ENCODE measurements at regions of chr3 and their contacts with region 1.

Region 1: GRCh38 chr3:196609343-196609775 is 30.1 kb upstream of the NRROS start:
- DNase-seq: peak; percentile 93 to 96 (median 94)
- ATAC-seq: peak; percentile 96
- H3K4me3 ChIP-seq: no peak overlapping the region
- H3K27ac ChIP-seq: no peak overlapping the region; the same call in 2 of the 3 replicates
- H3K4me1 ChIP-seq: peaks cover 11 to 20% of the 10 kb centered on the region in 2 experiments
- H3K27me3 ChIP-seq: no peaks in the 10 kb centered on the region
- CTCF ChIP-seq: peak; percentile 81 to 94 (median 92)
- EP300 ChIP-seq: 0 out of 2 replicates have a peak, but pooled peaks have one; percentile 8
- POLR2A ChIP-seq: no peak
- RAD21 ChIP-seq: peak; percentile 94 to 98

Region 2: GRCh38 chr3:196632046-196632751 is 22.8 kb after region 1 on chr3:
- CTCF ChIA-PET with region 1: no interaction called
- POLR2A ChIA-PET with region 1: interaction called, 6 read pairs
- in situ Hi-C with region 1: no loop called
- intact Hi-C with region 1: loop called (anchors 1 kb)
- DNase-seq: peak; percentile 95 to 97 (median 96)
- ATAC-seq: peak; percentile 93
- H3K4me3 ChIP-seq: peak overlapping the region; percentile 56
- H3K27ac ChIP-seq: peak overlapping the region; percentile 98
- H3K4me1 ChIP-seq: peaks cover 23 to 40% of the 10 kb centered on the region in 2 experiments
- H3K27me3 ChIP-seq: no peaks in the 10 kb centered on the region
- CTCF ChIP-seq: peak in 2 of 3 experiments; percentile 42 to 55; a peak in 4 of 6 replicates
- EP300 ChIP-seq: peak; percentile 67
- POLR2A ChIP-seq: peak; percentile 88
- RAD21 ChIP-seq: peak; percentile 6 to 13; a peak in 1 of 4 replicates

Region 3: DNA sequence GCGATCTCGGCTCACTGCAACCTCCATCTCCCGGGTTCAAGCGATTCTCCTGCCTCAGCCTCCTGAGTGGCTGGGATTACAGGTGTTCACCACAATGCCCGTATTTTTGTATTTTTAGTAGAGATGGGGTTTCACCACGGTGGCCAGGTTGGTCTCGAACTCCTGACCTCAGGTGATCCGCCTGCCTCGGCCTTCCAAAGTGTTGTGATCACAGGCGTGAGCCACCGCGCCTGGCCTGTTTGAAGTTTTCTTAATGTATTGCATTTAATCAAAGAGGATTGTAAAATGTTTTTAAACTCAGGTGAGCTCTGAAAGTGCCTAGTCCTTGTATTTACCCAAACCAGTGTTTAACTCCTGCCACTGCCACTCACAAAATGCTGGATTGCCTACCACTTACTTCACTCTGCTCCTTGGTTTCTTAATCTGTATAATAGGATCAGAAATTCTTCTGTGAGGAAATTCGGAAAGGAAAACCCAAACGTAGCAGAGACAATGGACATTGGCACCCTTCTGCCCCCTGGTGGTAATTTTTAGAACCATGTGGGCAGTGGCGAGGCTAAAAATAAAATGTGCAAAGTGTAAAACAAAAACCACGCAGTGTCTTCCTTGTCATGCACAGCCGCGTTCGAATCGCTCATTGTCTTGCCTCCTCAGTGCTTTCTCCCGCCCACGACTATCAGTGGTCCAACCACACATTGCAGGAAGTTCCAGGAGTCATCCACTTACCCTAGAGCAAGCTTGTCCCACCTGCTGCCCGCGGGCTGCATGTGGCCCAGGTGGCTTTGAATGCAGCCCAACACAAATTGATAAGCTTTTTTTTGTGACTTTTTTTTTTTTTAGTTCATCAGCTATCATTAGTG is 75.4 kb after region 1 on chr3:
- CTCF ChIA-PET with region 1: interaction called, 48 read pairs
- POLR2A ChIA-PET with region 1: interaction called, 3 read pairs
- in situ Hi-C with region 1: loop called (anchors 5 kb)
- intact Hi-C with region 1: loop called (anchors 1 kb)
- DNase-seq: peak; percentile 63 to 81 (median 68)
- ATAC-seq: peak; percentile 92
- H3K4me3 ChIP-seq: no peak overlapping the region
- H3K27ac ChIP-seq: no peak overlapping the region
- H3K4me1 ChIP-seq: peaks cover 3 to 7% of the 10 kb centered on the region in 2 experiments; a peak in 3 of 5 replicates
- H3K27me3 ChIP-seq: no peaks in the 10 kb centered on the region
- CTCF ChIP-seq: peak; percentile 81 to 91 (median 84)
- EP300 ChIP-seq: no peak
- POLR2A ChIP-seq: no peak
- RAD21 ChIP-seq: peak; percentile 96 to 97

Region 4: GRCh38 chr3:196942226-196942914 is 333.0 kb after region 1 on chr3 and contains the start of gene NCBP2:
- CTCF ChIA-PET with region 1: no interaction called
- POLR2A ChIA-PET with region 1: no interaction called
- in situ Hi-C with region 1: no loop called
- intact Hi-C with region 1: loop called (anchors 2 kb)
- DNase-seq: peak; percentile 91 to 99 (median 94)
- ATAC-seq: peak; percentile 94
- H3K4me3 ChIP-seq: peak within 1 kb of the TSS; percentile 99
- H3K27ac ChIP-seq: peak within 1 kb of the TSS; percentile 93
- H3K4me1 ChIP-seq: peaks cover 7 to 12% of the 10 kb centered on the region in 2 experiments; a peak in 4 of 5 replicates
- H3K27me3 ChIP-seq: no peaks in the 10 kb centered on the region
- CTCF ChIP-seq: peak; percentile 88 to 91 (median 88)
- EP300 ChIP-seq: peak; percentile 69
- POLR2A ChIP-seq: peak; percentile 94
- RAD21 ChIP-seq: peak; percentile 52 to 62
- polyA plus RNA-seq, gene NCBP2: 56.4 to 100 TPM

Region 5: DNA sequence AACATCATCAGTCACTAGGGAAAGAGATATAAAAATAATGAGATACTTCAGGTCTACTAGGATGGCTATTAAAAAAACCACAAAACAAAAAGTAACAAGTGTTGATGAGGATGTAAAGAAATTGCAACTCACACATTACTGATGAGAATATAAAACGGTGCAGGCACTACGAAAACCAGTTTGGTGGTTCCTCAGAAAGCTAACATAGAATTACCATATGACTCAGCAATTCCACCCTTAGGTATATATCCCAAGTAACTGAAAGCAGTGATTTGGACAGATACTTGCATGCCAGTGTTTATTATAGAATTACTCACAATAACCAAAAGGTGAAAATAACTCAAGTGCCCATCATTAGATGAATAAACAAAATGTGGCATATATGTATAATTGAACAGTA is 507.7 kb after region 1 on chr3:
- CTCF ChIA-PET with region 1: no interaction called
- POLR2A ChIA-PET with region 1: no interaction called
- in situ Hi-C with region 1: no loop called
- intact Hi-C with region 1: no loop called
- DNase-seq: no peak
- ATAC-seq: no peak
- H3K4me3 ChIP-seq: no peak overlapping the region
- H3K27ac ChIP-seq: no peak overlapping the region
- H3K4me1 ChIP-seq: no peaks in the 10 kb centered on the region
- H3K27me3 ChIP-seq: no peaks in the 10 kb centered on the region
- CTCF ChIP-seq: no peak
- EP300 ChIP-seq: no peak
- POLR2A ChIP-seq: no peak
- RAD21 ChIP-seq: no peak

Region 6: DNA sequence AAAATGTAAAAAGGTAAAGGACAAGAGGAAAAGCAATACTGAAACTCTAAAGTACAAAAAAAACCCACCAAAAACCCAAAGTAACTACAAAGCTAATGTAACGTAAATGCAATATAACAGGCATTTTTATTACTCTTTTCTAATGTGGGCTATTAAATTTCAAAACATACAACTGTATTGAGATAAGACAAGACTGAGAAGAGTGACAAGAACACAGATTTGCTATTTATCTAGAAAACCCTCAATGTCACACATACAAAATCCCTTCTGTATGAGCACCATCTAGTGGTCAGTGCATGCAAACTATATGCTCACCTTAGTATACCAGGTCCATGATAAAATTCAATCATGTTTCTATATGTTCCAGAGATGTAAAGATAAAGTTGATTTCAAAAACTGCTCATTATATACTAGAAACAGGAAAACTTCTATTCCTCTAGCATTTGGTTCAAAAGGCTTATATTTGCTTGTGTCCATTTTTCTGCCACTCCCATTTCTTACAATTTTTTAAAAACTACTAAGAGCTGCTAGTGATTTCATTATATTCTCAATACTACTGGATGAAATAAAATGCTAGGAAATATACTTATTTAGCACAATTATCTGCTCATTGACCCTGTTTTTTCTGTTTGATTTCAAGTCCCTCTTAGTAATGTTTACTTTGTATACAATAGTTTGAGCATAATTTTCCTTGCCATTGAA is 577.7 kb after region 1 on chr3:
- CTCF ChIA-PET with region 1: no interaction called
- POLR2A ChIA-PET with region 1: no interaction called
- in situ Hi-C with region 1: no loop called
- intact Hi-C with region 1: loop called (anchors 5 kb)
- DNase-seq: peak; percentile 30 to 73 (median 46)
- ATAC-seq: peak; percentile 93
- H3K4me3 ChIP-seq: no peak overlapping the region
- H3K27ac ChIP-seq: no peak overlapping the region
- H3K4me1 ChIP-seq: no peaks in the 10 kb centered on the region; a peak in 1 of 5 replicates
- H3K27me3 ChIP-seq: no peaks in the 10 kb centered on the region
- CTCF ChIP-seq: peak; percentile 48 to 82 (median 68); a peak in 5 of 6 replicates
- EP300 ChIP-seq: no peak
- POLR2A ChIP-seq: no peak
- RAD21 ChIP-seq: peak; percentile 79 to 84

Measured in K562 (cell line).